ENCODE measurements at regions of chr1 and their contacts with region 1.

Region 1: DNA sequence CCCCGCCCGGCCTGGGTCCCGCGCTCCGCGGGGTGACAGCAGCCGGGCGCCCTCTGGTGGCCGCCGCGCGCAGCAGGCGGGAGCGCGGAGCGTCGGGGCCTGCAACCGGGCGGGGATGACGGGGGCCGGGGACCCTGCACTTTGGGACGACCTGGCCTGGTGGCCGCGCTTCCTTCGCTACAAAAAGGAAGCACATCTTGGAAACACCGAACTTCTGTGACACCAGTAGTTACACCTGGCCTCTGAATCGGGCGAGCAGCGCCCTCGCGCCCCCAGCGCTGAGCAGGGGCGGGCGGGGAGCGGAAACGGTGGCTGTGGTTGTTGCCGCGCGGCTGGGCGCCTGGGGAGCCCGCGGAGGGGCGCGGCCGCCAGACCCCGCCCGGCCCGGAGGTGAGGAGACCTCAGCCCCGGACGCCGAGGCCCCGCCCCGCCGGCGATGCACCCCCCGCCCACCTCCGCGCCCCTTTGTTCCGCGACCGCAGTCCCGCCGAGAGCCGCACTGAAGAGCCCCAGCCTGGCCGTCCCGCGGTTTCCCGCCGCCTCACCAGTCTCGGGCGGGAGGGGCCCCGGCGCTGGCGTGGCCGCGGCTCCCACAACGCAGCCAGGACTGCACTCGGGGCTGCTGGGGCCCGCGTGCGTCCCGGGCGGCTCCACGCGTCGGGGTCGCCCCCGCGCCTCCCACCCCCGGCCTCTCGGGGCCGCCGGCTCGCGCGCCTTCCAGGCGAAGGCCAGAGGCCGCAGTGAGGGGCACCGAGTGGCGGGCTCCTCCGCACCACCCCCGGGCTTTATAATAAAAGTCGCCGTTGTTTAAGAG is 59.3 kb downstream of the H3-3A start:
- DNase-seq: peak in 5 of 10 donors; percentile 50 to 78 (median 61)
- H3K4me3 ChIP-seq: peak overlapping the region; percentile 47 to 84 (median 71)
- H3K27ac ChIP-seq: peak overlapping the region in 54 of 59 donors; percentile 3 to 89 (median 62)
- H3K27me3 ChIP-seq: no peaks in the 10 kb centered on the region
- CTCF ChIP-seq: peak; percentile 37 to 99 (median 75)

Region 2: DNA sequence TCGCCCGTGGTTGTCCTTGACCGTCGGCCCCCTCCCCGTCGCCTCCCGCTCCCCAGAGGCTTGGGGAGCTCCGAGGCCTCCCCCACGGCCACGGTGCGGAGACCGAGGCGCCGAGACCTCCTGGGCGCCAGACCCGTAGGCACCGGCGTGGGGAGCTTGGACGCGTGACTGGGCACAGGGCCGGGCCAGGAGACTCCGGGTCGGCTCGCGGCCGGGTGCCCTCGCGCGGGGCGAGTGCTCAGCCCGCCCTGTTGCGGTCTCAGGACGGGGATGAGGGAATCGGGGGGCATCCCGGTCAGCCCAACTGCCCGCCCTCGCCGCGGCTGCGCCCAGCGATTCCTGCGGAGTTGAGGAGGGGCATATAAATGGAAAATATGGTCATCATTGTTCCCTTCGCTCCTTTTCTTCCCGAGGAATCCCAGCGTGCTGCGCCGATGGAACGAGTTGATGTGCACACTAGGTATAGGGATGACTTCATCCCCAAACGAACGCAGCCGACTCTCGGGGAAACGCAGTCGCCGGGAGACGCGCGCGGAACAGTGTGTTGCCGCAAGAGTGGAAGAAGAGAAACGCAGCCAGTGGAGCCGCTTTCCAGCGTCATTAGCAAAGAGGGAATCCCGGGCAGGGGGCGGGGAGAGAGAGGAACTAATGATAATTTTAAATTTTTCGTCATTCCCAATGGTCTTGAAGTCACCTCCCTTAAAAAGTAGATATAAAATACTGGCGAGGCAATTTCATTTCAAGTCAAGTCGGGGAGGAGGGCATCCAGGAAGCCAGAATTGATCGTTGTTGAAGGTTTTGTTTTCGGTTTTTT is 468.1 kb before region 1 on chr1:
- intact Hi-C with region 1: no loop called
- DNase-seq: peak; percentile 51 to 82 (median 74)
- H3K4me3 ChIP-seq: peak overlapping the region; percentile 68 to 98 (median 90)
- H3K27ac ChIP-seq: peak overlapping the region; percentile 84 to 100 (median 98)
- H3K27me3 ChIP-seq: no peaks in the 10 kb centered on the region
- CTCF ChIP-seq: peak in 7 of 56 donors; percentile 1 to 35 (median 4)

Region 3: GRCh38 chr1:225999227-225999911 is 122.4 kb before region 1 on chr1 and contains the start of gene SDE2:
- intact Hi-C with region 1: loop called (anchors 5 kb)
- DNase-seq: peak; percentile 98 to 100 (median 99)
- H3K4me3 ChIP-seq: peak within 1 kb of the TSS; percentile 56 to 100 (median 88)
- H3K27ac ChIP-seq: peak within 1 kb of the TSS; percentile 75 to 100 (median 97)
- H3K27me3 ChIP-seq: no peaks in the 10 kb centered on the region
- CTCF ChIP-seq: peak in 51 of 56 donors; percentile 3 to 68 (median 39)
- total RNA-seq, gene SDE2: 10.8 to 22.0 (median 14.6) TPM

Region 4: GRCh38 chr1:226083302-226084101 is 38.3 kb before region 1 on chr1:
- intact Hi-C with region 1: loop called (anchors 5 kb)
- DNase-seq: peak; percentile 88 to 94 (median 90)
- H3K4me3 ChIP-seq: peak overlapping the region; percentile 51 to 95 (median 83)
- H3K27ac ChIP-seq: peak overlapping the region in 54 of 59 donors; percentile 20 to 89 (median 74)
- H3K27me3 ChIP-seq: no peaks in the 10 kb centered on the region
- CTCF ChIP-seq: peak in 37 of 56 donors; percentile 2 to 62 (median 28)

Region 5: GRCh38 chr1:226186124-226187018 is 64.6 kb after region 1 on chr1 and contains the start of gene ACBD3:
- intact Hi-C with region 1: loop called in 1 of 2 experiments (anchors 5 kb)
- DNase-seq: peak; percentile 77 to 95 (median 90)
- H3K4me3 ChIP-seq: peak within 1 kb of the TSS; percentile 57 to 100 (median 92)
- H3K27ac ChIP-seq: peak within 1 kb of the TSS; percentile 65 to 96 (median 87)
- H3K27me3 ChIP-seq: no peaks in the 10 kb centered on the region
- CTCF ChIP-seq: peak in 31 of 56 donors; percentile 10 to 46 (median 33)
- total RNA-seq, gene ACBD3: 22.6 to 41.8 (median 29.5) TPM

Region 6: DNA sequence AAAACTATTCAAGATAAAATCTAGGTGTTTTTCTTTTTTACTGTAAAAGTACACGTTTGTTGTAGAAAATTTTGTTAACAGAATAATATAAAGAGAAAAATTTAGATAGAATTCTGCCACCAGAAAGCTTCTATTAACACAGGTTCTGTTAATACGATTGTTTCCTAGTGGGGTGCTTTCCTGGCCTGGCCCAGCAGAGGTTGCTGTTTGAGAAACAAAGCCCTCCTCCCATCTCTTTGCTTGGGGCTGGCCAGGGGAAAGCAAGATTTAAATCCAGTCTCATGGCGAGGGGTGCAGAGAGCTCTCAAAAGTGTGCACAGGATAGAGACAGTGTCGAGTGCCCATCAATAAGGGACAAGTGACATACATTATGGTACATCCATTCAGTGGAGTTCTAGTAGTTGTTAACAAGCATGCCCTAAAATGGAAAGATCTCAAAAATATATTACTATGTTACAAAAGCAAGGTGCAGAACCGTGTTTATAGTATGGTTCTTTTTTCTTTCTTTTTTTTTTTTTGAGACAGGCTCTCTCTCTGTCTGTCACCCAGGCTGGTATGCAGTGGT is 79.3 kb after region 1 on chr1:
- intact Hi-C with region 1: loop called in 1 of 2 experiments (anchors 2 kb)
- DNase-seq: no peak
- H3K4me3 ChIP-seq: no peak overlapping the region
- H3K27ac ChIP-seq: no peak overlapping the region
- H3K27me3 ChIP-seq: peaks cover 0 to 3% (median 0%) of the 10 kb centered on the region in 45 donors
- CTCF ChIP-seq: no peak

Region 7: GRCh38 chr1:226268421-226269116 is 146.8 kb after region 1 on chr1:
- intact Hi-C with region 1: no loop called
- DNase-seq: no peak
- H3K4me3 ChIP-seq: no peak overlapping the region
- H3K27ac ChIP-seq: peak overlapping the region in 5 of 59 donors; percentile 6 to 55 (median 30)
- H3K27me3 ChIP-seq: no peaks in the 10 kb centered on the region
- CTCF ChIP-seq: no peak

Region 8: GRCh38 chr1:226332947-226333346 is 211.2 kb after region 1 on chr1:
- intact Hi-C with region 1: loop called (anchors 1 to 10 kb)
- DNase-seq: no peak
- H3K4me3 ChIP-seq: peak overlapping the region in 48 of 59 donors; percentile 1 to 54 (median 33)
- H3K27ac ChIP-seq: no peak overlapping the region
- H3K27me3 ChIP-seq: no peaks in the 10 kb centered on the region
- CTCF ChIP-seq: no peak